Activated CD4-positive, alpha-beta T cell treated with anti-CD3 and anti-CD28 coated beads for 36 hours (primary cell): ENCODE measurements at regions of chr13 and their contacts with region 1.

Region 1: DNA sequence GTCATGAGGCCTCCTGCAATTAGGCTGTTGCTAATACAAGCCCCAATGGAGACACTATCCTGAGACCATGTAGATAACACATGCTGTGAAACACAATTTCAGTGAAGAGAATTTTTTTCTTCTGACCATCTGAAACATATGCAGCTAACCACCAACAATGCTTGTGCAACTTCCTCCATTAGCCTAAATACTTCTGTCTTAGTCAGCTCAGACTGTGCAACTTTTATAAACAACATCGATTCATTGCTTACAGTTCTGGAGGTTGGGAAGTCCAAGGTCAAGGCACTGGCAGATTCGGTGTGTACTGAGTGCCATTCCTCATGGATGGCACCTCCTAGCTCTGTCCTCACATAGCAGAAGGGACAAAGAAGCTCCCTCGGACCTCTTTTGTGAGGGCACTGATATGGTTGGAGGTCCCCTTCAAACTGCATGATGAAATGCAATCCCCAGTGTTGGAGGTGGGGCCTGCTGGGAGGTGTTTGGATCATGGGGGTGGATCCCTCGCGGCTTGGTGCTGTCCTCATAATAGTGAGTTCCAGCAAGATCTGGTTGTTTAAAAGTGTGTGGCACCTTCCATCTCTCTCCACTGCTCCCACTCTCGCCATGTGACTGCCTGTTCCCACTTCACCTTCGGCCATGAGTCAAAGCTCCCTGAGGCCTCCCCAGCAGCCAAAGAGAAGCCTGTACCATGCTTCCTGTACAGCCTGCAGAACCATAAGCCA is 27.7 kb downstream of the STK24 start:
- DNase-seq: peak; percentile 35
- ATAC-seq: peak; percentile 28
- H3K4me3 Mint-ChIP-seq: no peak overlapping the region
- H3K27ac Mint-ChIP-seq: peak overlapping the region; percentile 76
- H3K4me1 Mint-ChIP-seq: peaks cover 84% of the 10 kb centered on the region
- H3K27me3 Mint-ChIP-seq: no peaks in the 10 kb centered on the region

Region 2: GRCh38 chr13:97434397-97435201 is 1114.6 kb before region 1 on chr13:
- CTCF ChIA-PET with region 1: no interaction called
- POLR2A ChIA-PET with region 1: no interaction called
- intact Hi-C with region 1: no loop called
- DNase-seq: peak; percentile 63
- ATAC-seq: no peak
- H3K4me3 Mint-ChIP-seq: peak overlapping the region; percentile 94
- H3K27ac Mint-ChIP-seq: peak overlapping the region; percentile 71
- H3K4me1 Mint-ChIP-seq: peaks cover 25% of the 10 kb centered on the region
- H3K27me3 Mint-ChIP-seq: peaks cover 1% of the 10 kb centered on the region

Region 3: GRCh38 chr13:98429977-98430736 is 119.0 kb before region 1 on chr13:
- CTCF ChIA-PET with region 1: no interaction called
- POLR2A ChIA-PET with region 1: no interaction called
- intact Hi-C with region 1: no loop called
- DNase-seq: no peak
- ATAC-seq: no peak
- H3K4me3 Mint-ChIP-seq: no peak overlapping the region
- H3K27ac Mint-ChIP-seq: no peak overlapping the region
- H3K4me1 Mint-ChIP-seq: no peaks in the 10 kb centered on the region
- H3K27me3 Mint-ChIP-seq: peaks cover 14% of the 10 kb centered on the region

Region 4: DNA sequence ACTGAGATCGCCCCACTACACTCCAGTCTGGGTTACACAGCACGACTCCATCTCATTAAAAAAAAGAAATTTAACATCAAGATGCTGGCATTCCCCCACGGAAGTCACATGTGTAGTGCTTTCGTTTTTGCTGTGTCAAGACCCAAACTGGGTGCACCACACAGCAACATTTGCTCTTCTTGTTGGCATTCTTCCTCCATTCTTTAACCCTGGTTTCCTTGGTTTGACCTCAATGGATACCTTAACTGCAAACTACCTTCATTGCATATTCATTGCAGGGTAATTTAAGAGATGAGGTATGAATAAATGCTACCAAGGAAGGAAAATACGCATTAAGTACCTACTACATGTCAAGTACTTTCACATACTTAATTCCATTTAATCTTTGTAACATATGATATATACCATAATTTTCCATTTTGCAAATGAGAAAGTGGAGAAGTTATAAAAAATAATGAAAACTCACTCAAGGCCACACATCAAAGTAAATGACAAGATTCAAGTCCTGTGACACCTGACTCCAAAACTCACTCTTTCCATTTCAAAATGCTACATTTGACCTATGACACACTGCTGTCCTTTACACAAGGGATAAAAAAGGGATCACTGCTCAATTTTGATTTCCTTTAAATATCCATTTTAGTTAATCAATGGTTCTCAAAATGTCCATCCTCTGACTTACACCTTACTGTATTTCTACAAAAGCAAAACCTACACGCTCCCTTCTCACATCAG is 31.4 kb before region 1 on chr13:
- CTCF ChIA-PET with region 1: interaction called, 5 read pairs
- POLR2A ChIA-PET with region 1: no interaction called
- intact Hi-C with region 1: loop called in 1 of 2 experiments (anchors 2 kb)
- DNase-seq: peak; percentile 69
- ATAC-seq: peak; percentile 54
- H3K4me3 Mint-ChIP-seq: peak overlapping the region; percentile 43
- H3K27ac Mint-ChIP-seq: peak overlapping the region; percentile 93
- H3K4me1 Mint-ChIP-seq: peaks cover 98% of the 10 kb centered on the region
- H3K27me3 Mint-ChIP-seq: no peaks in the 10 kb centered on the region

Region 5: DNA sequence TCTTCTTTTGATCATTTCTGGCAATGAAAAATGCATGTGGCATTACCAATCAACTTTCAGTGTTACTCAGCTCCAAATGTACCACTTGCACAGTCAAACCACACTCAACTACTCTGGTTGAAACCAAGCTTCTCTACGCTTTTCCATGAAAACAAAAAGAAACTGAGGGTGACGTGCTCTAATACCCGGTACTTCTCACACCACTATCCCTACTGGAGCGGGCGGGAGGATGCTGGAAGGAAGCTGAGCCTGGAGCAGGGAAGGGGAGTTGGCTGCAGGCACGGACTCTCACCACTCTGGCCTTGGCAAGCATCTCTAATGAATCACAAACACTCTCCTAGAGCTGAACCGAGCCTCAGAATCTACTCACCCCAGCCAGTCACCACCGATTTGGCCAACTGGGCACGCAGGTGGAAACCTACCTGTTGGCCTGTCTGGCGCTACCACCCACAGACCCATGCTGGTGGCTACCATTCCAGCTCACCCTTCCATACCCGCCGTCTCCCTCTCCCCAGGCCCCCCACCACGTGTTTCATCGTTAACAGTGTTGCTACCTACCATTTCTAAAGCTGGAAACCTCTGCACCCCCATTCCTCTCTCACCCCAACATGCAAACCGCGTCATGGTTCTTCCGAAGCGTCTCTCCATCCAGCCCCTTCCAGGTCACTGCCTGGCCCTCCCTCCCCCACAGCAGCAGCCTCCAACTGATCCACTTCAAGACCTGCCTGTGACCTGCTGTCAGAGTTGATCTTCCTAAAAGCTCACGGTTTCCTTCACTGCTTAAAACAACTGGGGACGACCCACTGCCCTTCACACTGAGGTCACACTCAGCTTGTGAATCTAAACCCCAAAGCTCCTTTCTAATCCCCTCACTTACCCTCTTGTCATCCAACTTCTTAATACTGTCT is 20.2 kb before region 1 on chr13:
- CTCF ChIA-PET with region 1: interaction called, 4 read pairs
- POLR2A ChIA-PET with region 1: interaction called, 7 read pairs
- intact Hi-C with region 1: loop called in 1 of 2 experiments (anchors 2 kb)
- DNase-seq: peak; percentile 55
- ATAC-seq: peak; percentile 80
- H3K4me3 Mint-ChIP-seq: peak overlapping the region; percentile 29
- H3K27ac Mint-ChIP-seq: peak overlapping the region; percentile 87
- H3K4me1 Mint-ChIP-seq: peaks cover 93% of the 10 kb centered on the region
- H3K27me3 Mint-ChIP-seq: no peaks in the 10 kb centered on the region

Region 6: DNA sequence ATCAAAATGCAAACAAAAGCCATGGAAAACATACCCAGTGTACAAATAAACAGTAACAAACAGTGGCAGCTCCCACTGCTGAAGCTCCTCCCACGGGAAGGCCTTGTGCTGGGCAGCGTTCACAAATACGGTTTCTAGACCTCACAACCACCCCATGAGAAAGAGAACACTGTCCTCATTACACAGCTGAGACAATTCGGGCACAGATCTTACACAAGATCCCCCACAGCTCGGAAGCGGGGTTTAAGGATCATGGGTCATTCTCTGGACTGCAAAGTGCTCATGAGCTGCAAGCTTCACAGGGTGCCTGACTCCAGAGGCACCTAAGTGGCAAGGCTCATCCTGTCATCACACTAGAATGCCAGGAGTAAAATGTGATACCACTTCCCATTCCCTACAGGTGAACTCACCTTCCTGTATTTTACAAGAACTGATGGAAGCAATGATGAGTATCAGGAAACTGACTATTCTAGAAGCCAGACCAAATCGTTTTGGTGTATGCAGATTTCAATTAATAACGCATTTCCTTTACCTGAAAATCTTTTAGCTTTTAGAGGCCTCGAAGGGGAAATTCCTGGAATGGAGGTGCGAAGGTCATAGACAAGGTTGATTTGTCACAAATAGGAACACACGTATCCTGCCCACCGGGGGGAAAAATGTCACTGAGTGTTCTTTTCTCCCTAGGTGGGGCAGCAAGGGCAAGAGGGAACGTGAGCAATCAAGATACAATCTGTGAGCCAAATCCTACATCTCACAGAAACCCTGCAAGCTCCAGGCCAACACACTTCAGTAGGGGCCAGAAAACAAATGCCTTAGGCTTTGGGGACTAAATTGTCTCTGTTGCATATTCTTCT is 13.4 kb before region 1 on chr13:
- CTCF ChIA-PET with region 1: interaction called, 19 read pairs
- POLR2A ChIA-PET with region 1: interaction called, 5 read pairs
- intact Hi-C with region 1: no loop called
- DNase-seq: no peak
- ATAC-seq: no peak
- H3K4me3 Mint-ChIP-seq: no peak overlapping the region
- H3K27ac Mint-ChIP-seq: peak overlapping the region; percentile 23
- H3K4me1 Mint-ChIP-seq: peaks cover 93% of the 10 kb centered on the region
- H3K27me3 Mint-ChIP-seq: no peaks in the 10 kb centered on the region

Region 7: DNA sequence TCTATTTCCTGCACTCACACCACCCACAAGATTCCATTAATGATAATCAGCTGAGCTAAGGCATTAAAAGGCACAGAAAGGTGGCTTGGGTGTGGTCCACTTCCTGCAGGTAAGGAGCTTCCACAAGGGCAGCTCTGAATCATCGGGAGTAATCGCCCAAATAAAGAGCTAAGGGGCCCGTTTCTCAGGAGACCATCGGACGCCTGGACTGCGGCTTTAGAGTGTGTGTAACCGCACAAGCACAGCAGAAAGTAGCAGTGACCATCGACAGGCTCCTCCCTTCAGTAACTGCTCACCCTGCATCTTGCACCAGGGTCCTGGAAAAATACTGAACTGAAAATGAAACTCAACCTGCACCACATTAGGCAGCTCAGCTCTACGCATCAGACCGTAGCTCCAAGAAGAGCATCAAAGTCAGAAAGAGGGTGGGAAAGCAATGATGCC is 21.8 kb after region 1 on chr13:
- CTCF ChIA-PET with region 1: interaction called, 6 read pairs
- POLR2A ChIA-PET with region 1: interaction called, 5 read pairs
- intact Hi-C with region 1: loop called (anchors 1 to 2 kb)
- DNase-seq: peak; percentile 65
- ATAC-seq: peak; percentile 58
- H3K4me3 Mint-ChIP-seq: peak overlapping the region; percentile 75
- H3K27ac Mint-ChIP-seq: peak overlapping the region; percentile 73
- H3K4me1 Mint-ChIP-seq: peaks cover 87% of the 10 kb centered on the region
- H3K27me3 Mint-ChIP-seq: no peaks in the 10 kb centered on the region

Region 8: DNA sequence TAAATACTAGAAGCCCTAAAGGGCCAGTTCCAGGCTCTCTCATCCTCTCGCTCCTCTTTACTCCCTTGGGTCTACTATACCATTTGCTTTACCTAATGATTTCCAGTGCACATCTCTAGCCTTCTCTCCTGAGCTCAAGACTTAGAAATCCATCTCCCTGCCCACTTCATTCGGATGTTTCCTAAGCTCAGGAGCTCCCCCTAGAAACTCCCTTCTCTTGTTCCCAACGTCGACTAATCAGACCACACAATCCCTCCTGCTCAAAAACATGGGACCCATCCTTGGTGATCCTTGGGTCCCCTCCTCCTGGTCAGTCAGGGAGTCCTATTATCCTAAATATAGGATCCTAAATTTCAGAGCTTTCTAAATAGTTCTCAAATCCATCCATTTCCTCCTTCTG is 48.9 kb after region 1 on chr13:
- CTCF ChIA-PET with region 1: interaction called, 3 read pairs
- POLR2A ChIA-PET with region 1: interaction called, 4 read pairs
- intact Hi-C with region 1: loop called in 1 of 2 experiments (anchors 2 kb)
- DNase-seq: no peak
- ATAC-seq: no peak
- H3K4me3 Mint-ChIP-seq: no peak overlapping the region
- H3K27ac Mint-ChIP-seq: peak overlapping the region; percentile 20
- H3K4me1 Mint-ChIP-seq: peaks cover 16% of the 10 kb centered on the region
- H3K27me3 Mint-ChIP-seq: no peaks in the 10 kb centered on the region

Region 9: GRCh38 chr13:99004978-99005377 is 455.8 kb after region 1 on chr13:
- CTCF ChIA-PET with region 1: no interaction called
- POLR2A ChIA-PET with region 1: no interaction called
- intact Hi-C with region 1: no loop called
- DNase-seq: no peak
- ATAC-seq: no peak
- H3K4me3 Mint-ChIP-seq: no peak overlapping the region
- H3K27ac Mint-ChIP-seq: no peak overlapping the region
- H3K4me1 Mint-ChIP-seq: peaks cover 63% of the 10 kb centered on the region
- H3K27me3 Mint-ChIP-seq: no peaks in the 10 kb centered on the region